HEK293 (cell line): ENCODE measurements at regions of chr17 and their contacts with region 1.

Region 1: DNA sequence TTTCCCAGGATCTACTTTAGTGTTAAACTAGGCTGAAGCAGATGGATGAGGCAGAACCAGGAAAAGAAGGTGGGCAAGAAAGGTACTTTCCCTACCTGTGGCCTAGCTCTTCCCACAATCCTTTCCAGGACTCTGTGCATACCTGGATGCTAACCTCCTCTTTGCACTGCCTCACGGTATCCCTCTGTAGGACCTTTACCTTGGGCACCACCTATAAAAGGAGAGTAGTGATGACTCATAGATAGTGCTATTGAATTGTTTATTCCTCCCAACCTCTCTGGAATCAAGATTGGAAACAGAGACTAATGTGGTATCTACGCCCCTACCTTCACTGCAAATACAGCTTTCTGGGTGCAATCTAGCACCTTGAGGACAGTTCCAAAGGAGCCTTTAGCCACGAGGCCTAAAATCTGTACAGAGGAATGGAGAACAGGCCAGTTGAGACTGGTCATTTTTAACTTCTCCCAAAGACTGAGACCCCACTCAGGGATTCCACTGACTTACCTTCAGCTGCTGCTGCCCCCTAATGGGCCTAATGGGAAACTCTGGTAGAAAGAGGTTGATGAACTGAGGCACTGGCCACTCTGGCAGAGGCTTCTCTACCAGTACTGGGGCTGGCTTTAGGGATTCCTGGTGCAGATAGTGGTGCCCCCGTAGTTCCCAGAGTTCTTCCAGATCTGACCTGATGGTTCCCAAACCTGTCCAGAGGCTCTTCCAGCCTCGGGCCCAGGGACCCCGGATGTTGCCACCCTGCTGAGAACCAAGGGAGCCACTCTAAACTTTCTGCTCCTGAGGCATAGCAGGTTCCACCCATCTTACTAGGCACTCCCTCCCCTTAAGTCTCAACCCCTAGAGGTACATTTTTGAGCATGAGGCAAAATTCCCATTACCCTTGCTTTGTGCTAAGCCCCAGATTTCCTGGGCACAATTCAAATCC is 781 bp downstream of the RSKR start:
- H3K4me3 ChIP-seq: no peak overlapping the region
- H3K27ac ChIP-seq: peak overlapping the region; percentile 13; the same call in 1 of the 2 replicates
- H3K4me1 ChIP-seq: no peaks in the 10 kb centered on the region
- CTCF ChIP-seq: peak; percentile 28; the same call in 1 of the 2 replicates

Region 2: DNA sequence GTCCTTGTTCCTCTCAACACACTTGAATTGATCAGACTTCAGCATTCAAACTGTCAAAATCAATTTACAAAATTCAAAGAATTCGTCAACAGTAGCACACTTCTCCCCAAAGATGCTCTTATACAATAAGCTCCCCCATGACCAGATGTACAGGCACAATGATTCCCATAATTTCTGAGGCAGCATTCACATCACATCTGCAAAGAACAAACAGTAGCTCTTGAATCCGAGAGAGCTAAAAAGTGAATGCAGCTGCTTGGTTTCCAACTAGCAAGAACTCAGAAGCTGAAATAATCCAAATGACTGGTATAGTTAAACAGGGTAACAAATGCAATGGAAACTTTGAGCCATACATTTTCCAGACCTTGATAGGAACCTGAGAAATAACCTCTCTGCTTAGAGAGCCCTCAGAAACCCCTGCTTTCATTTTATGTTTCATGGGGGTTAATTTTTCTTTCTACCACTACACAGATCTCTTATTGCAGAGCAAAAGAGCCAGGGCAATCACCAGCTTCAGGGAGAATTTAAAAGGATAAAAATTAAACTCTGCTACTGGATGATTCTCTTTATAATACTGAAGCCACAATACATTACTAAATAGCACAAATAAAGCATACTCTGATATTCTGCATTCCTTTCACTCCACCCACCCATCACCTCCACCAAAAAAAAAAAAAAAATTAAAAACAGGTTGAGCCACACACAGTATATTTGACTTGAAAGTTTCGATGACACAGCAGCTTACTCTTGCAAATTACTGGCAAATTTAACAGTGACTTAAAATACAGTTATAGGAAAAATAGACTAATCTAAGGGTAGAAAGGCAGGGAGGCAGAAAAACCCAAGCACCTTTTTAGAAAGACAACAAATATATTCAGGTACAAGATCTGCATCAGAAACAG is 317.3 kb before region 1 on chr17:
- CTCF ChIA-PET with region 1: no interaction called
- POLR2A ChIA-PET with region 1: no interaction called
- H3K4me3 ChIP-seq: no peak overlapping the region
- H3K27ac ChIP-seq: no peak overlapping the region
- H3K4me1 ChIP-seq: no peaks in the 10 kb centered on the region
- CTCF ChIP-seq: no peak

Region 3: DNA sequence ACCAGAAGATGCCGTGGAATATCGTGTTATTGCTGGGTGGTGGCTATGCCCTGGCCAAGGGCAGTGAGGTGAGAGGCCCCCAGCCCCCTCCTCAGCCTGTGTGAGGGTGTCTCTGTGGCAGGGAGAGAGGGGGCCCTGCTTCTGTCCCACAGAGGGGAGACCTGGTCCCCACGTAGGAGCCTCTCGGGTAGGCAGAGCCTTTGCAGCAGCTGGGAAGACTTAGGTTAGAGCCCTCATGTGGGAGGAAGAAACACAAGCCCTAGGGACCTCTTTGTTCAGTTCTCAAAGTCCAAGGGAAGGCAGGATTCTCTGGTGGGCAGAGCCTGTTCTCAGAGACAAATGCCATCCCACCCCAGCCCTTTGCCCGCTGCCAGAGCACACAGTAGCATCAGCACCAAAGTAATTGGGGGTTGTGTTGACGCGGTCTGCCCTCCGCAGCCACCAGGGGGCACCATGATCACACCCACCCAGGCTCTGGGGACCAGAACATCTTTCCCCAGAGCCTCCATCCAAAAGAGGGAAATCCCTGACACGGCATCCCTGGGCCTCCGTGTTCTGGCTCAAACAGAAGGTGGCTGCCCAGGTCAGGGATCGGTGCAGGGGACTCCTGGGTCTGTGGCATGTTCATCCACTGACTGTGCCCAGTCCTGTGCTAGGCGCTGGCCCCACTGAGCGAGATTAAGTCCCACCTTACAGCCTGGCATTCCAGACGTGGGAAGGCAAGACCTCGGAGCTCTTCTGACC is 118.6 kb before region 1 on chr17:
- CTCF ChIA-PET with region 1: interaction called, 10 read pairs
- POLR2A ChIA-PET with region 1: no interaction called
- H3K4me3 ChIP-seq: no peak overlapping the region
- H3K27ac ChIP-seq: no peak overlapping the region
- H3K4me1 ChIP-seq: no peaks in the 10 kb centered on the region
- CTCF ChIP-seq: peak; percentile 86

Region 4: GRCh38 chr17:28540231-28540630 is 73.0 kb before region 1 on chr17:
- CTCF ChIA-PET with region 1: interaction called, 10 read pairs
- POLR2A ChIA-PET with region 1: no interaction called
- H3K4me3 ChIP-seq: no peak overlapping the region
- H3K27ac ChIP-seq: no peak overlapping the region
- H3K4me1 ChIP-seq: no peaks in the 10 kb centered on the region
- CTCF ChIP-seq: no peak

Region 5: DNA sequence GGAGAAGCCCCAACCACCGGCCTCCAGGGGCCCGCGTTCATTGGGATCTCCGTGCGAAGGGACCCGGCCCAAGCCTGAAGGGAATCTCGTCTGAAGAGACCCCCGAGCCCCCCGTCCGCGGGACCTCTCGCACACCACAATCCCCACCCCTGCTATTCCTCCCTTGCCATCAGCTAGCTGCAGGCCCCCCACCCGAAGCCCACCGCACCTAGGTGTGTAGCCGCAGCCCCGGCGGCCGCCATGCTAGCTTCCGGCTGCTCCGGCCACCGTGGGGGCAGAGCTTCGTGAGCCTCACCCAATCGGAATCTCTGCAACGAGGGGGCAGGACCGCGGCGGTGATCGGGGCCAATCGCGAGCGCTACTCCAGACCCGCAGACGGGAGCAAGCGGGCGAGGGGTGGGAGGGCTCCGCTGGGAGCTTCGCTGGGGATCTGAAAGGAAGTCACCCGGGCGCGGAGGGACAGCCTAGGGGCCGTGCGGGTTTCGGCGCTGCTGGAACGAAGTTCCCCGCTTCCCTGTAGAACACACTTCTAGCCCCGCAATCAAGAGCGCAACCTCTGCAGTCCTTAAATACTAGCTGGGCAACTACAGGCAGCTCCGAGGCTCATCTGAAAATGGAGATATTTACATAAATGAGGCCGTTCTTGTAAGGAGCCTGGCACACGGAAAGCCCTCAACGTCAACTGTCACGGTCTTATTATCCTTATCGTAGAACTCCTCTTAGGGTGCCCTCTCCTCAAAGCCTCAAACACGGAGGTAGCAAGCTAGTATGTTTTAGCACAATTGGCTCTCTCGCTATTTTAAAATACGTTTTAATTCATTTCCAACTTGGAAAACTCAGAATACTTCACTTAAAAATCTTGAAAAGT is 41.7 kb before region 1 on chr17 and contains the start of gene PIGS:
- CTCF ChIA-PET with region 1: interaction called, 13 read pairs
- POLR2A ChIA-PET with region 1: no interaction called
- H3K4me3 ChIP-seq: peak within 1 kb of the TSS; percentile 73
- H3K27ac ChIP-seq: peak within 1 kb of the TSS; percentile 84
- H3K4me1 ChIP-seq: peaks cover 11% of the 10 kb centered on the region
- CTCF ChIP-seq: no peak

Region 6: GRCh38 chr17:28598799-28599310 is 14.3 kb before region 1 on chr17 and contains the start of gene SPAG5:
- CTCF ChIA-PET with region 1: interaction called, 19 read pairs
- POLR2A ChIA-PET with region 1: interaction called, 8 read pairs
- H3K4me3 ChIP-seq: peak within 1 kb of the TSS; percentile 87
- H3K27ac ChIP-seq: peak within 1 kb of the TSS; percentile 90
- H3K4me1 ChIP-seq: no peaks in the 10 kb centered on the region
- CTCF ChIP-seq: no peak

Region 7: DNA sequence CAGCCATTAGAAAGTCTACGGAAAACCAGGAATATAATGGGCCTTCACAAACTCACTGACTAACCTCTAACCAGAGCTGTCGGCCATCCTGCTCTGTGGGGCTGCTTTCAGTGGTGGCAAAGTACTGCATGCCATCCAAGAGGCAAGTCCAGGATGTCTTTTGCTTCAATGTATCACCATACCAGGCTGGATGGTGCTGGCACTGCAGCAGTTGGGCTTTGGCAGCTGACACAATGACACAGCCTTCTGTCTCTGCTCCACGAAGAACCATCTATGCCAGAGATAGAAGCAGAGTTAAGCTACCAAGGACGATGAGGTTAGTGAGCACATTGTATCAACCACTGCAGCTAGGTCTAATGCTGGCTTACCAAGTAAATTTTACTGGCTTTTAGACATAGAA is 10.5 kb after region 1 on chr17:
- CTCF ChIA-PET with region 1: interaction called, 25 read pairs
- POLR2A ChIA-PET with region 1: interaction called, 4 read pairs
- H3K4me3 ChIP-seq: no peak overlapping the region
- H3K27ac ChIP-seq: no peak overlapping the region
- H3K4me1 ChIP-seq: no peaks in the 10 kb centered on the region
- CTCF ChIP-seq: no peak